ENCODE measurements at regions of chr1 and their contacts with region 1.

Region 1: DNA sequence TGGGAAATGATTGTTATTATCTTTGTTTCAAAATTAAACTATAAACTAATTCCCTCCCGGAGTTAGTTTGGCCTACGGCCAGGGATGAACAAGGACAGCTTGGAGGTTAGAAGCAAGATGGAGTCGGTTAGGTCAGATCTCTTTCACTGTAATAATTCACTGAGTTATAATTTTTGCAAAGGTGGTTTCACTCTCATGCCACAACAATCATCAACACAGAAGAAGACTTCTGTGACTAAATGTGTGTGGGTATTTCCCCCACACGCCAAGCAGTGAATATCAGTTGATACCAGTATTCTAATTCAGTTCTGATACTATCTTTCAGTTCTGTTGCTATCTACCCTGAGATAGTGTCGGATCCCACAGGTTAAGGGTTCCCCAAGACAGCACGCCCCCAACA is 215.1 kb downstream of the S1PR1 start:
- DNase-seq: peak; percentile 49
- ATAC-seq: peak; percentile 94
- H3K4me3 Mint-ChIP-seq: no peak overlapping the region
- H3K27ac Mint-ChIP-seq: peak overlapping the region; percentile 21
- H3K4me1 Mint-ChIP-seq: peaks cover 39% of the 10 kb centered on the region
- H3K27me3 Mint-ChIP-seq: peaks cover 13% of the 10 kb centered on the region

Region 2: GRCh38 chr1:101371259-101371658 is 80.6 kb before region 1 on chr1:
- CTCF ChIA-PET with region 1: interaction called, 4 read pairs
- POLR2A ChIA-PET with region 1: no interaction called
- intact Hi-C with region 1: loop called in 1 of 2 experiments (anchors 5 kb)
- DNase-seq: no peak
- ATAC-seq: peak; percentile 95
- H3K4me3 Mint-ChIP-seq: no peak overlapping the region
- H3K27ac Mint-ChIP-seq: no peak overlapping the region
- H3K4me1 Mint-ChIP-seq: peaks cover 10% of the 10 kb centered on the region
- H3K27me3 Mint-ChIP-seq: peaks cover 6% of the 10 kb centered on the region

Region 3: DNA sequence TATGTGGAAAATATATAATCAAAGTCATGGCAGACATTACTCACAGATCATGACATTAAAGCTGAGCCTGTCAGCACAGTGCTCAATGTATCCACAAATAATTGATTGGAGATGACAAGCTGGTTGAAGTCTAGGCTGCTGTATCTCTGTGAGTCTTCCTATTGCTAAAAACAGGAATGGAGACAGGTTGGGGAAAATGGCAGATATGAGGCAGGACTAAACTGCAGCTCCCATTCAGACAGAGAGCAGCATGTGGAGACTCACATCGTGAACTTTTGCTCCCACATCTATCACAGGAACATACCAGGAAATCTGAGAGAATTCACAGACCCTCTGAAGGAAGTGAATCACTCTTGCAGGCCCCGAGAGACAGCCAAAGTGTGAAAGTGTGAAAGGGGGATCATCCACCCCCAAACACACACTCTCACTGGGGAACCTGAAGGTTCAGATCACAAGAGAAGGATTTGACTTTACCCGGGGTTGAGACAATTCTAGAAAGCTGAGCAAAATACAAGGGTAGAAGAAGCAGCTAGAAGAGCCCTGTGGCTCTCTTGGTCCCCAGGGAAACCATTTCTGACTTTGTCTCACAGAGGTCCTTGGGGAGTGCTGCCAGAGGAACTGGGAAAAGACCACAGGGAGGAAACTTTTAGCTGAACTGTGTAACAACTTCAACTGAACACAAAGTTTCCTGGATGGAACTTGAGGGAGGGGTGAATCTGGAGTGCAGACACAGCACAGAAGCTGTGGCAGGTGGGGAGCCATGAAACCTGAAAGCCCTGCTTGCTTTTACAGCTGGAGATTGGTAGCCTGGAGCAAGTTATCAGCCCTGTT is 41.6 kb before region 1 on chr1:
- CTCF ChIA-PET with region 1: interaction called, 3 read pairs
- POLR2A ChIA-PET with region 1: no interaction called
- intact Hi-C with region 1: loop called in 1 of 2 experiments (anchors 5 kb)
- DNase-seq: peak; percentile 16
- ATAC-seq: peak; percentile 74
- H3K4me3 Mint-ChIP-seq: no peak overlapping the region
- H3K27ac Mint-ChIP-seq: no peak overlapping the region
- H3K4me1 Mint-ChIP-seq: peaks cover 10% of the 10 kb centered on the region
- H3K27me3 Mint-ChIP-seq: peaks cover 3% of the 10 kb centered on the region

Region 4: DNA sequence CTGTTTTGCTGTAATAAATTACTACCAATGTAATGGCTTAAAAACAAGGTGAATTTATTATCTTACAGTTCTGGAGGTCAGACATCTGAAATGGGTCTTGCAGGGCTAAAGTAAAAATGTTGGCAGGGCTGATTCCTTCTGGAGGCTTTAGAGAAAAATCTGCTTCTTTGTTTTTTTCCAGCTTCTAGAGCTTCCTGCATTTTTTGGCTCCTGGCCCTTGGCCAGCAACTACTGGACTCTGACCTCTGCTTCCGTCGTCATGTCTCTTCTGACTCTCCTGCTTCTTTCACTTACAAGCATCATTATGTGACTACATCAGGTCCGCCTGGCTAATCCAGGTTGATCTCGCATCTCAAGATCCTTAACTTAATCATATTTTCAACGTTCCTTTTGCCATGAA is 135.9 kb after region 1 on chr1:
- CTCF ChIA-PET with region 1: no interaction called
- POLR2A ChIA-PET with region 1: no interaction called
- intact Hi-C with region 1: no loop called
- DNase-seq: no peak
- ATAC-seq: no peak
- H3K4me3 Mint-ChIP-seq: no peak overlapping the region
- H3K27ac Mint-ChIP-seq: no peak overlapping the region
- H3K4me1 Mint-ChIP-seq: no peaks in the 10 kb centered on the region
- H3K27me3 Mint-ChIP-seq: peaks cover 10% of the 10 kb centered on the region

Region 5: DNA sequence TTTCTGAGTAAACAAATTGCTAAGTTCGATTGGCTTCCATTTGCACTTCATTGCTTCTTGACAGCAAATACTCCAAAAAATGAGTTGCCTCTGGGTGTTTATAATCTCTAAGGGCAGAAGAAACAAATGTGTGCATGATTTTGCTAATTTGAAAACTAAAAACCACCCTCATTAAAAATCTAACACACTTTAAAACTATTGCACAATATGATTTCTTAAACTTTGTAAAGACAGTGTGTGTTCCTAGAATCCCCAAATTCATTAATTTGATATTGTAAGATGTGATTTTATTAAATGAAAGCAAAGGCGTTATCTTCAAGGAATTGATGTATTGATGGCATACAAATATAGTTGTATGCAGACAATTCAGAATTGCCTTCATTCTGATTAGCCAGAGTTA is 193.9 kb after region 1 on chr1:
- CTCF ChIA-PET with region 1: no interaction called
- POLR2A ChIA-PET with region 1: no interaction called
- intact Hi-C with region 1: no loop called
- DNase-seq: no peak
- ATAC-seq: no peak
- H3K4me3 Mint-ChIP-seq: no peak overlapping the region
- H3K27ac Mint-ChIP-seq: no peak overlapping the region
- H3K4me1 Mint-ChIP-seq: no peaks in the 10 kb centered on the region
- H3K27me3 Mint-ChIP-seq: no peaks in the 10 kb centered on the region